Activated B cell treated with CpG ODN at 0.5 μM for 24 hours (primary cell): ENCODE measurements at regions of chr12 and their contacts with region 1.

Region 1: DNA sequence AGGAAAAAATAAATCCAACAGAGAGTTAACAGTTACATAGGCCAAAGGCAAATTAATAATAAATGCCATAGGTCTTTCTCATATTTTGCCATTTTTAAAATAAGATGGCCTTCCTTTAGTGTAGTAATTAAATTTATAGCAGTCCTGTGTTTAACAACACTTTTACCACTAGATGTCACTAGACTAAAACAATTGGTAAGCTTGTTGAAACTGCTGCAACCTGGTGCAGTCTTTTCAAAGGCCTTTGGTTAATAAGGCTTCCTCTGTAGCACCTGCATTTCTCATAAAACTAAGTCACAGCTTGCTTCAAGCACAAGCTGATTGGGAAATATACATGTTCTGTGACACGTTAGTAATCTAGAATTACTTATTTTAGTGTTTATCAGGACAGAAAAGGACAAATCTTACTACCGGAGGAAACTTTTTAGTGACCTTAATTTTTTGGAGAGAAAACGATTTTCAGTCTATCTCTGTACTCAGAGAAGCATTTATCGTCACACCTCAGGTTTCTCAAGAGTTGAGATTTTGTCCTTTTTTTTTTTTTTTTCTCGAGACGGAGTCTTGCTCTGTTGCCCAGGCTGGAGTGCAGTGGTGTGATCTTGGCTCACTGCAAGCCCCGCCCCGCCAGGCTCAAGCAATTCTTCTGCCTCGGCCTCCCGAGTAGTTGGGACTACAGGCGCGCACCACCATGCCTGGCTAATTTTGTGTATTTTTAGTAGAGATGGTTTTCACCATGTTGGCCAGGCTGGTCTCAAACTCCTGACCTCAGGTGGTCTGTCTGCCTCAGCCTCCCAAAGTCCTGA is 20.0 kb downstream of the BORCS5 start:
- DNase-seq: no peak
- ATAC-seq: peak; percentile 83
- H3K4me3 Mint-ChIP-seq: no peak overlapping the region
- H3K27ac Mint-ChIP-seq: no peak overlapping the region
- H3K4me1 Mint-ChIP-seq: peaks cover 19% of the 10 kb centered on the region
- H3K27me3 Mint-ChIP-seq: no peaks in the 10 kb centered on the region
- CTCF ChIP-seq: no peak

Region 2: DNA sequence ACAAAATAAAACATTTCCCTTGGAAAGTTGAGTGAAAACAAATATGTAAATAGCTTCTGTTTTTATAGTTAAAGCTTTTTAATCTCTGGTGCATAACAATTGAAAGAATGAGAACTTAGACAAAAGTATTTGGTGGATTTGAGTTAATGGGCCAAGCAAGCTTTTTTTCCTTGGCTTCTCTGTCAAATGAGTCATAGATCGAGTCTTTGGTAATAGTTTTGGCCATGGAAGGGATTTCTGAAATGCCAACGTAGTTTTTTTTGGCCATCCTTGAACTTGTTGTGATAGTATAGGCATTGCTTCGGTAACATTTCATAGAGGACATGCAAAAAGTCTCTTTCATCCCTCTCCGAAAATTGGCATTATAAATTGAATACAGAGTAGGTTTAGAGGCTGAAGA is 284.2 kb after region 1 on chr12:
- CTCF ChIA-PET with region 1: interaction called, 4 read pairs
- POLR2A ChIA-PET with region 1: no interaction called
- intact Hi-C with region 1: loop called (anchors 1 kb)
- DNase-seq: no peak
- ATAC-seq: no peak
- H3K4me3 Mint-ChIP-seq: no peak overlapping the region
- H3K27ac Mint-ChIP-seq: no peak overlapping the region
- H3K4me1 Mint-ChIP-seq: peaks cover under 1% of the 10 kb centered on the region
- H3K27me3 Mint-ChIP-seq: peaks cover 3% of the 10 kb centered on the region
- CTCF ChIP-seq: no peak

Region 3: GRCh38 chr12:12704593-12705230 is 327.9 kb after region 1 on chr12:
- CTCF ChIA-PET with region 1: interaction called, 4 read pairs
- POLR2A ChIA-PET with region 1: no interaction called
- intact Hi-C with region 1: loop called (anchors 1 kb)
- DNase-seq: no peak
- ATAC-seq: peak; percentile 87
- H3K4me3 Mint-ChIP-seq: no peak overlapping the region
- H3K27ac Mint-ChIP-seq: no peak overlapping the region
- H3K4me1 Mint-ChIP-seq: peaks cover 9% of the 10 kb centered on the region
- H3K27me3 Mint-ChIP-seq: no peaks in the 10 kb centered on the region
- CTCF ChIP-seq: no peak

Region 4: GRCh38 chr12:12736759-12737676 is 360.2 kb after region 1 on chr12:
- CTCF ChIA-PET with region 1: interaction called, 148 read pairs
- POLR2A ChIA-PET with region 1: interaction called, 16 read pairs
- intact Hi-C with region 1: loop called (anchors 1 kb)
- DNase-seq: peak; percentile 19
- ATAC-seq: peak; percentile 91
- H3K4me3 Mint-ChIP-seq: peak overlapping the region; percentile 30
- H3K27ac Mint-ChIP-seq: peak overlapping the region; percentile 72
- H3K4me1 Mint-ChIP-seq: peaks cover 13% of the 10 kb centered on the region
- H3K27me3 Mint-ChIP-seq: no peaks in the 10 kb centered on the region
- CTCF ChIP-seq: peak; percentile 19

Region 5: GRCh38 chr12:13211859-13212664 is 835.2 kb after region 1 on chr12:
- CTCF ChIA-PET with region 1: interaction called, 7 read pairs
- POLR2A ChIA-PET with region 1: no interaction called
- intact Hi-C with region 1: loop called (anchors 5 kb)
- DNase-seq: peak; percentile 31
- ATAC-seq: peak; percentile 77
- H3K4me3 Mint-ChIP-seq: no peak overlapping the region
- H3K27ac Mint-ChIP-seq: no peak overlapping the region
- H3K4me1 Mint-ChIP-seq: peaks cover 4% of the 10 kb centered on the region
- H3K27me3 Mint-ChIP-seq: peaks cover 18% of the 10 kb centered on the region
- CTCF ChIP-seq: no peak